Activated naive CD4-positive, alpha-beta T cell treated with anti-CD3 and anti-CD28 coated beads, Interleukin-2, amount 10 ng/mL, durations not matched to agents 7 days and 5 days (primary cell): ENCODE measurements at regions of chr1 and their contacts with region 1.

Region 1: DNA sequence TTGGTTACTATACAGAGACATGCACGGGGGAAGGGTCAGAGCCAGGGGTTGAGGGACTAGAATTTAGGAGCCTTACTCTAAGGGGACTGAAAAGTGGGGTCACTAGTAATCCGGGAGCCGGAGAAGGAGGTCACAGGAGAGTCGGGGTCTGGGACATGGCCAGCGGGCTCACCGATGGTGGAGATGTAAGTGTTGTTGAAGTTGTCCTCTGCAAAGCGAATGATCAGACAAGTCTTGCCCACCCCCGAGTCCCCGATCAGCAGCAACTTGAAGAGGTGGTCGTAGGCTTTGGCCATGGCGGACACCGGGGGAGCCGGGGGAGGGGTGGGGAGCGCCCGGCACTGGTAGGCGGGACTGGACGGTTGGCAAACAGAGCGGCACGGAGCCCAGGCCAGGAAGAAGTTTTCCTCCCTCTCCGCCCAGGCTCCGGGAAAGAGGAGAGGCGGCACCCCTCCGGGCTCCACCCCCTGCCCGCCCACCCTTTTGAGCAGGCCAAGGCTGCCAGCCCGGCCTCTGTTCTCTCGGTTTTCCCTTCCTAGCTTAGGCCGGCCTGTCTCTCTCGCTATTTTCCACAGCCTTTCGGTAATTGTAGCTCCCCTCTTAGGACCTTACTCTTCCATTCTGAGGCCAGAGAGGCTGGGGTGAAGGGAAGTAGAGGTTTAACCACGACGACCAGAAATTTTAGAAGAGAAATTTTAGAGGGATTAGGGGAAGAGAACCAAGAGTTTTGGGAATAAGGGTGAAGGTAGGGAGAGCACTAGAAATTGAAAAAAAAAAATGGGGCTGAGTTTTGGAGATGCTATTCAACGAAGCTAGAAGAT is at the start of gene RAB13:
- DNase-seq: no peak
- H3K4me3 Mint-ChIP-seq: peak within 1 kb of the TSS; percentile 39
- H3K27ac Mint-ChIP-seq: peak within 1 kb of the TSS; percentile 89
- H3K4me1 Mint-ChIP-seq: peaks cover 31% of the 10 kb centered on the region
- H3K27me3 Mint-ChIP-seq: peaks cover 22% of the 10 kb centered on the region

Region 2: GRCh38 chr1:153790966-153791647 is 195.0 kb before region 1 on chr1:
- CTCF ChIA-PET with region 1: interaction called, 54 read pairs
- DNase-seq: peak; percentile 46
- H3K4me3 Mint-ChIP-seq: peak overlapping the region; percentile 3
- H3K27ac Mint-ChIP-seq: peak overlapping the region; percentile 65
- H3K4me1 Mint-ChIP-seq: peaks cover 55% of the 10 kb centered on the region
- H3K27me3 Mint-ChIP-seq: peaks cover 38% of the 10 kb centered on the region

Region 3: GRCh38 chr1:153827168-153827964 is 158.8 kb before region 1 on chr1:
- CTCF ChIA-PET with region 1: interaction called, 17 read pairs
- DNase-seq: no peak
- H3K4me3 Mint-ChIP-seq: no peak overlapping the region
- H3K27ac Mint-ChIP-seq: peak overlapping the region; percentile 35
- H3K4me1 Mint-ChIP-seq: no peaks in the 10 kb centered on the region
- H3K27me3 Mint-ChIP-seq: no peaks in the 10 kb centered on the region

Region 4: GRCh38 chr1:153958111-153958960 is 27.8 kb before region 1 on chr1 and contains the start of gene CRTC2:
- CTCF ChIA-PET with region 1: interaction called, 10 read pairs
- DNase-seq: peak; percentile 99
- H3K4me3 Mint-ChIP-seq: peak within 1 kb of the TSS; percentile 98
- H3K27ac Mint-ChIP-seq: peak within 1 kb of the TSS; percentile 96
- H3K4me1 Mint-ChIP-seq: peaks cover 70% of the 10 kb centered on the region
- H3K27me3 Mint-ChIP-seq: no peaks in the 10 kb centered on the region

Region 5: GRCh38 chr1:154419620-154420571 is 433.7 kb after region 1 on chr1:
- CTCF ChIA-PET with region 1: no interaction called
- DNase-seq: peak; percentile 59
- H3K4me3 Mint-ChIP-seq: peak overlapping the region; percentile 4
- H3K27ac Mint-ChIP-seq: peak overlapping the region; percentile 81
- H3K4me1 Mint-ChIP-seq: peaks cover 45% of the 10 kb centered on the region
- H3K27me3 Mint-ChIP-seq: no peaks in the 10 kb centered on the region